ENCODE measurements at regions of chr17 and their contacts with region 1.

Region 1: DNA sequence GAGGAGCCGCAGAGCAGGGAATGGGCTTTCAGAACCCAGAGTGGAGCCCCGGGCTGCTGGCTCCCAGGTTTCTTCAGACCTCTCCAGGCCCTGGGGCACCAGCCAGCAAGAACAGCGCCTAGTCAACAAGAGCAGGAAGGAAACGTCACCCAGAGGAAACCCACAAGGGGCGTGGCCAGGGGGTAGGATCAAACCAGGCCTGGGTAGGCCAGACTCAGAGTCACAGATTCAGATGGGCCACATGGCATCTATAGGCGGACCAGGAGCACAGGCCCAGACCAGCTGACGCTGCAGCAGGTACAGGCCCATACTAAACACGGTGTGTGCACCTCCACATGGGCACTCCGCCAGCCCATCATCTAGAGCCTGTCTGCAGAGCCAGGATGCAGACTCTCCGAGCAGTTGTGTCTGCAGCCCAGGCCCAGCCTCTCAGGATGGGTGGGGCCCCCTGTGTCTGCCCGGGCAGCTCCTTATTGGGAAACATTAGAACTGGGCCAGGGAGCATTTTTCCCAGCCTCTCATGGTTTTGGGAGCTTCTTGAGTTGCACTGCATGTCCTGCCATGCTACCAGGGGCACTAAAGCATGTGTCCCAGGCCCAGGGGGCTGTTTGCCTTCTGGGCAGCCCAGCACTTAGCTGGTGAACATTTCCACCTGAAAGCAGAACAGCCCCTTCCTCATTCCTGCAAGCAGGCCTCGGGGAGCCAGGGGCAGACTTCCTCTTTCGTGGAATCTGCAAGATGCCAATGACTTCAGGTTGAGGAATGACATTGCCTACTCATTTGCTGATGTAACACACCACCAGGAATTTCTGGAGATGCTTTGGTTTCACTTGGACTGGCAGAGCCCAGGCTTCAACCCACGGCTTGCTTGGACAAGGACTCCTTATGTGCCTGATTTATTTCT is at the start of gene NLRP1:
- DNase-seq: peak; percentile 78 to 97 (median 95)
- ATAC-seq: peak; percentile 96
- H3K4me3 ChIP-seq: peak within 1 kb of the TSS; percentile 97
- H3K4me3 Mint-ChIP-seq: peak within 1 kb of the TSS; percentile 94 to 100 (median 98)
- H3K27ac ChIP-seq: peak within 1 kb of the TSS; percentile 94
- H3K27ac Mint-ChIP-seq: peak within 1 kb of the TSS; percentile 90 to 100 (median 99)
- H3K4me1 ChIP-seq: peaks cover 44 to 67% of the 10 kb centered on the region in 2 donors
- H3K4me1 Mint-ChIP-seq: peaks cover 43 to 74% (median 63%) of the 10 kb centered on the region in 7 donors
- H3K27me3 ChIP-seq: no peaks in the 10 kb centered on the region
- H3K27me3 Mint-ChIP-seq: peaks cover 0 to 12% (median 0%) of the 10 kb centered on the region in 5 donors
- total RNA-seq, gene NLRP1: 86.6 to 360 (median 259) TPM

Region 2: GRCh38 chr17:5486204-5487124 is 98.2 kb before region 1 on chr17 and contains the start of gene MIS12:
- CTCF ChIA-PET with region 1: no interaction called
- POLR2A ChIA-PET with region 1: interaction called, 11 read pairs
- intact Hi-C with region 1: loop called (anchors 1 kb)
- DNase-seq: peak; percentile 78 to 100 (median 97)
- ATAC-seq: peak; percentile 93
- H3K4me3 ChIP-seq: peak within 1 kb of the TSS; percentile 94
- H3K4me3 Mint-ChIP-seq: peak within 1 kb of the TSS; percentile 88 to 97 (median 94)
- H3K27ac ChIP-seq: peak within 1 kb of the TSS; percentile 98
- H3K27ac Mint-ChIP-seq: peak within 1 kb of the TSS; percentile 95 to 99 (median 98)
- H3K4me1 ChIP-seq: peaks cover 21 to 28% of the 10 kb centered on the region in 2 donors
- H3K4me1 Mint-ChIP-seq: peaks cover 22 to 77% (median 66%) of the 10 kb centered on the region in 7 donors
- H3K27me3 ChIP-seq: no peaks in the 10 kb centered on the region
- H3K27me3 Mint-ChIP-seq: no peaks in the 10 kb centered on the region
- total RNA-seq, gene MIS12: 16.3 to 53.6 (median 38.4) TPM

Region 3: GRCh38 chr17:5706577-5707216 is 122.1 kb after region 1 on chr17:
- CTCF ChIA-PET with region 1: interaction called, 20 read pairs
- POLR2A ChIA-PET with region 1: interaction called, 4 read pairs
- intact Hi-C with region 1: loop called in 1 of 2 experiments (anchors 1 kb)
- DNase-seq: peak in 8 of 9 donors; percentile 21 to 58 (median 42)
- ATAC-seq: peak; percentile 73
- H3K4me3 ChIP-seq: no peak overlapping the region
- H3K4me3 Mint-ChIP-seq: no peak overlapping the region
- H3K27ac ChIP-seq: no peak overlapping the region
- H3K27ac Mint-ChIP-seq: no peak overlapping the region
- H3K4me1 ChIP-seq: no peaks in the 10 kb centered on the region
- H3K4me1 Mint-ChIP-seq: peaks cover 0 to 1% (median 0%) of the 10 kb centered on the region in 7 donors
- H3K27me3 ChIP-seq: no peaks in the 10 kb centered on the region
- H3K27me3 Mint-ChIP-seq: peaks cover 3 to 41% (median 32%) of the 10 kb centered on the region in 5 donors

Region 4: DNA sequence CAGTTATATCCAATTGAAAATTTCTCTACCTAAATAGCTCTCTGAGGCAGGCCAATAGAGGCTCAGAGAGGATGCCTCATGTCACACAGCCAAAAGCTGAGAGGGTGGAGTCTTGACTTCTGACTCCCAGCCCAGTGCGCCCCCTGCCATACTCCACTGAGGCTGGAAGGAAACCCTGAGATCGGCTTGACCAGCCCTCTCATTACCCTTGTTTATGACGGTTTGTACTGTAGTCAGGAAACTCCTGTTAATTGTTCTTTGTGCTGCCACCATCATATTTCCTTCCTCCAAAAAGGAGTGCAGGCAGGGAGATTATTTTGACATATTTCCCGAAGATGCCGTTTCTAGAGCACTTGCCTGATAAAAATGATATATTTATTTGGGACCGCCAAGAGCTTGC is 742.4 kb after region 1 on chr17:
- CTCF ChIA-PET with region 1: no interaction called
- POLR2A ChIA-PET with region 1: no interaction called
- intact Hi-C with region 1: no loop called
- DNase-seq: no peak
- ATAC-seq: no peak
- H3K4me3 ChIP-seq: no peak overlapping the region
- H3K4me3 Mint-ChIP-seq: no peak overlapping the region
- H3K27ac ChIP-seq: no peak overlapping the region
- H3K27ac Mint-ChIP-seq: no peak overlapping the region
- H3K4me1 ChIP-seq: no peaks in the 10 kb centered on the region
- H3K4me1 Mint-ChIP-seq: no peaks in the 10 kb centered on the region
- H3K27me3 ChIP-seq: no peaks in the 10 kb centered on the region
- H3K27me3 Mint-ChIP-seq: peaks cover 5 to 50% (median 35%) of the 10 kb centered on the region in 5 donors

Region 5: DNA sequence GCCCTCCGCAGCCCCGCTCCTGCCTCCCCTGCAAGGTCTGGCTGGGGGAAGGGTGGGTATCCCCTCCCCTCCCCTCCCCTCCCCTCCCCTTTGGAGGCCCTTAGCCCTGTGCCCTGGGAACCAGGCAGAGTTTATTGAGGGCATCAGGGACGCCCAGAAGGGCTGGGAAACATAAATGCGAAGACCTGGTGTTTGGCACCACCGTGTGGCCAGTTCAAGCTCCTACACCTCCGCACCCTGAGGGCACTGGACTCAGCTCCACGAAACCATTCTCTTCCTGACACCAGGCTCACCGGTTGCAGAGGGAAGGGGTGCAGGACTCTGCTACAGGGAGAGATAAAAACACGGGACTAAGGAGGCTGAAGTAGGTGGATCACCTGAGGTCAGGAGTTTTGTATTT is 851.3 kb after region 1 on chr17:
- CTCF ChIA-PET with region 1: interaction called, 13 read pairs
- POLR2A ChIA-PET with region 1: interaction called, 7 read pairs
- intact Hi-C with region 1: loop called (anchors 1 kb)
- DNase-seq: peak; percentile 33 to 61 (median 52)
- ATAC-seq: peak; percentile 98
- H3K4me3 ChIP-seq: no peak overlapping the region
- H3K4me3 Mint-ChIP-seq: no peak overlapping the region
- H3K27ac ChIP-seq: no peak overlapping the region
- H3K27ac Mint-ChIP-seq: peak overlapping the region in 2 of 9 donors; percentile 25 to 67
- H3K4me1 ChIP-seq: no peaks in the 10 kb centered on the region
- H3K4me1 Mint-ChIP-seq: peaks cover 0 to 2% (median 0%) of the 10 kb centered on the region in 7 donors
- H3K27me3 ChIP-seq: no peaks in the 10 kb centered on the region
- H3K27me3 Mint-ChIP-seq: peaks cover 7 to 73% (median 10%) of the 10 kb centered on the region in 5 donors

Region 6: DNA sequence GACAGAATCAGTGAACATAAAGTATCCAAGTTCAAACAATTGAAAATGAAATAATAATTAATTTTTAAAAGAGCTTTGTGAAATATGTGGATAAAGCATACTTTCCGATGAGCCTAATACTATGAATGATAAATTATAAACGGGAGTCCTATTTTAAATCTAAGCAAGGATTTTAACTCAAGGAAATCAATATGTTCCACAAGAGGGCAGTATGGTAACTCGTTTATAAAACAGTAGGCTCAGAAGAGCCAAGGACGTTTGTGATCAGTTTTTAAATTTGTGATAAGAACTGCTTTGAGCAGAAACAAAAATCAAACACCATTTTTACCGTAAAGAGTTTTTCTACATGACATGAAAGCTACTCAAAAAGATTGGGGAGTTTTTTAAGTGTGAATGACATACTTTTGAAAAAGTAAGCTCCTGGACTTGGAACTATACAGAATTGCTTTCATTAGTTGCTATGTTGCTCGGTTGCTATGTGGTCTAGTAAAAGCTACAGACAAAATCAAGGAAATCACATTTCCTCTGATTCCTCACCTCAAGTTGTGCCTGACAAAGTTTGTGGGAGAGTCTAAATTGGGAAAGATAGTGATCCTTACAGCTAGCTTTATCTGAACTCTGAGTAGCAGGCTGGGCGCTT is 1258.7 kb after region 1 on chr17:
- CTCF ChIA-PET with region 1: no interaction called
- POLR2A ChIA-PET with region 1: no interaction called
- intact Hi-C with region 1: loop called in 1 of 2 experiments (anchors 5 kb)
- DNase-seq: peak in 6 of 9 donors; percentile 16 to 50 (median 30)
- ATAC-seq: peak; percentile 70
- H3K4me3 ChIP-seq: no peak overlapping the region
- H3K4me3 Mint-ChIP-seq: no peak overlapping the region
- H3K27ac ChIP-seq: no peak overlapping the region
- H3K27ac Mint-ChIP-seq: no peak overlapping the region
- H3K4me1 ChIP-seq: no peaks in the 10 kb centered on the region
- H3K4me1 Mint-ChIP-seq: peaks cover 0 to 18% (median 0%) of the 10 kb centered on the region in 7 donors
- H3K27me3 ChIP-seq: no peaks in the 10 kb centered on the region
- H3K27me3 Mint-ChIP-seq: peaks cover 27 to 67% (median 43%) of the 10 kb centered on the region in 5 donors

Measured in naive thymus-derived CD4-positive, alpha-beta T cell (primary cell).